Endothelial cell of umbilical vein (primary cell): ENCODE measurements at regions of chr3 and their contacts with region 1.

Region 1: DNA sequence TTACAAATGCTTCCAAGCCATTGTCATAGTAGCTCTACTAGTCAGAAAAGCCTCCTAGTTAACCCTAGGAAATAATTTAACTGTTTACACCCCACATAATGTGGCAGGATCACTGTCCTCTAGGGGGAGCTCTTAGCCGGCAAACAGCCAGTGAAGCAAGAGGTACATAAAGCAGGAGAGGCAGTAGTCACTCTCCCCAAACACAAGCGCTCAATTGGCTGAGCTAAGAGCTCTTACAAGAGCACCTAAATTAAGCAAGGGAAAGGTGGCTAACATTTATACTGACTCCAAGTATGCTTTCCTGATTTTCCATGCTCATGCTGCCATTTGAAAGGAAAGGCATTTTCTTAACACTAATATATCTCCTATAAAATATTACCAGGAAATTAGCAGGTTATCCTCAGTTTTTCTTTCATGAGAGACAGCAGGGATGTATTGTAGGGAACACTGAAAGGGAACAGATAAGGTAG is 37.6 kb downstream of the NCEH1 start:
- DNase-seq: peak; percentile 75
- H3K4me3 ChIP-seq: no peak overlapping the region
- H3K27ac ChIP-seq: no peak overlapping the region
- H3K4me1 ChIP-seq: peaks cover 34% of the 10 kb centered on the region
- H3K27me3 ChIP-seq: no peaks in the 10 kb centered on the region
- CTCF ChIP-seq: peak; percentile 68
- POLR2A ChIP-seq: no peak

Region 2: DNA sequence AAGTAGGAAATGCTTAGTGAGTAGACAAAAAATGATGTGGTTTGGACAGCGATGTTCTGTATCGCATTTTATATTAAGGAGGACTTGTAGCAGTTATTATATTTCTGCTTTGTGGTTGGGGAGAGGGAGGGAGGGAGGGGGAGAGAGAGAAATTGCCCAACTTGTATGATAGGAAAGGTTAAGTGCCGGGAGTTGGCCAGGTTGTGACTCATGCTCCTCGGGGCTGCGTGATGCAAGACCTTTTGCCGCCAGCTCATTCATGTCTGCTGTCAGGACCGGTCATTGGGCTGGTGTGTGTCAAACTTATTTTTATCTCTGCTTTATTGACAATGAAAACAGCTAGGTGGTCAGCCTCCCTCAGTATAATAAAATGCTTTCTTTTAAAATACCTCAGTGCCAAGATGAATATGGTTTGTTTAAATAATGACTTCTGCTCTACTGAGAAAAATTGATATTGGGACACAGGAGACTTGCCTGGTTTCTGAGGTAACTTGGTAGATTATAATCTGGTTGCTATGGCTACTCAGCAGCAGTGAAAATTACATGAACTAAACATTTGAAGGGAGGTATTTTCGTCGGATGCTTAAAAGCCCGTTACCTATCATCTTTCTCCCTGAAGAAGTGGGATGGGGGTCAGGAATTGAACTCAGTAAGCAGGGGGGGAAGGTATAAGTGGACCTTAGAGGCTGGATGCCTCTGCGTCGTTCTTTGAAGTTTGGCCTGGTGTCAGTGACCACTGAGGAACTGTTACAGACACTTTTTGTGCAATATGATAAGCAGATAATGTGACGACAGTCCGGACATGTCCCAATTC is 543.2 kb before region 1 on chr3:
- CTCF ChIA-PET with region 1: no interaction called
- POLR2A ChIA-PET with region 1: no interaction called
- dilution Hi-C with region 1: no loop called
- intact Hi-C with region 1: no loop called
- DNase-seq: peak; percentile 94
- H3K4me3 ChIP-seq: no peak overlapping the region
- H3K27ac ChIP-seq: peak overlapping the region; percentile 95
- H3K4me1 ChIP-seq: peaks cover 73% of the 10 kb centered on the region
- H3K27me3 ChIP-seq: no peaks in the 10 kb centered on the region
- CTCF ChIP-seq: no peak
- POLR2A ChIP-seq: no peak

Region 3: DNA sequence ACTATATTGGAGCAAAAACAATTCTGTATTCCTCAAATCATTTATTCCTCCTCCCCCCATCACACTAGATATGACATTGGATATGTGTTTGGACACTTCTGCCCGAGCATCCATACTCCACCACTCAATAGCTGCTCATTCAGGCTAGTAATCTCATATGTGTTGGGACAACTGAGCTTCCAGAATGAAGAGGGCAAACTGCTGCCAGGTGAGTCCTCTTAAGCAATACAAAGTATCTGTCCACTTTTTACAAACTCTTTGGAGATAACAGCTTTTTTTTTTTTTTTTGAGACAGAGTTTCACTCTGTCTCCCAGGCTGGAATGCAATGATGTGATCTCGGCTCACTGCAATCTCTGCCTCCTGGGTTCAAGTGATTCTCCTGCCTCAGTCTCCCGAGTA is 144.6 kb before region 1 on chr3:
- CTCF ChIA-PET with region 1: no interaction called
- POLR2A ChIA-PET with region 1: no interaction called
- dilution Hi-C with region 1: no loop called
- intact Hi-C with region 1: no loop called
- DNase-seq: no peak
- H3K4me3 ChIP-seq: no peak overlapping the region
- H3K27ac ChIP-seq: no peak overlapping the region
- H3K4me1 ChIP-seq: no peaks in the 10 kb centered on the region
- H3K27me3 ChIP-seq: peaks cover 0 to 4% of the 10 kb centered on the region in 2 experiments
- CTCF ChIP-seq: no peak
- POLR2A ChIP-seq: no peak

Region 4: GRCh38 chr3:172685346-172686214 is 12.3 kb after region 1 on chr3:
- CTCF ChIA-PET with region 1: interaction called, 15 read pairs
- POLR2A ChIA-PET with region 1: no interaction called
- dilution Hi-C with region 1: no loop called
- intact Hi-C with region 1: no loop called
- DNase-seq: no peak
- H3K4me3 ChIP-seq: no peak overlapping the region
- H3K27ac ChIP-seq: no peak overlapping the region
- H3K4me1 ChIP-seq: no peaks in the 10 kb centered on the region
- H3K27me3 ChIP-seq: no peaks in the 10 kb centered on the region
- CTCF ChIP-seq: no peak
- POLR2A ChIP-seq: no peak

Region 5: GRCh38 chr3:172710664-172711453 is 37.6 kb after region 1 on chr3 and contains the start of gene NCEH1:
- CTCF ChIA-PET with region 1: interaction called, 38 read pairs
- POLR2A ChIA-PET with region 1: interaction called, 3 read pairs
- dilution Hi-C with region 1: no loop called
- intact Hi-C with region 1: loop called (anchors 1 kb)
- DNase-seq: peak; percentile 98
- H3K4me3 ChIP-seq: peak within 1 kb of the TSS; percentile 36 to 79 (median 75)
- H3K27ac ChIP-seq: peak within 1 kb of the TSS; percentile 88
- H3K4me1 ChIP-seq: peaks cover 26% of the 10 kb centered on the region
- H3K27me3 ChIP-seq: no peaks in the 10 kb centered on the region
- CTCF ChIP-seq: peak; percentile 75 to 88
- POLR2A ChIP-seq: peak; percentile 99
- total RNA-seq, gene NCEH1: 20.3 and 20.5 TPM in 2 replicates

Region 6: DNA sequence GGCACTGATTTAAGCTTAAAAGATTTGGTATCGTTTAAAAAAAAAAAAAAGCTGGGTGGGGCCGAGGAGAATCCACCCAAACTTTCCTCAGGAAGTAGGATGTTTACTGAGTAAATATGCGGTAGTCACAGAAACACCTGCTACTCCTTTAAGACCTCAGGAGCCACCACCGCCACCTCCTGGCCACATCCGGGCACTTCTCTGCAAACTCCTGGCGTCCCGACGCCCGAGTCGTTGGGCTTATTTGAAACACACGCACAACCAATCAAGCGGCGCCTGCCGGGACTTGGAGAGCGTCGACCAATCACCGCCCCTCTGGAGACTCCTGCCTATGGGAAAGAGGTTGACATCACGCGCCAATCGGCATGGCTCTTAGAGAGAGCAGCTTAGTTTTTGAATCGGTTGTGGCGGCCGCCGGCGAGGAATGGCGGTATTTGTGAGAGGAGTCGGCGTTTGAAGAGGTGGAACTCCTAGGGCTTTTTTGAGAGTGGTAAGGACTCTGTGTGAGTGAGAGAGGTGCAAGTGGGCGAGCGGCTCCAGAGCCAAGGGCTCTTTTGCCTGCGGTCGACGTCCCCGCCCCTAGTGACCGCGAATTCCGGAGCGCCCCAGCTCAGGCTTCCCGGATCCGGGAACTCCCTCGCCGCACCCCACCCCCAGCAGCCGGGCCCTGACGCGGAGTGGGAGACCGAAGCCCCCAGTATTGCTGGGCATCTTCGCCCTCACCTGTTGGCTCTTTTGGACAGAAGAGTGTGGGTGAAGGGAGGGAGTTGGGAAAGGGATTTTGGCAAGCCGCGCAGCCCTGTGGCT is 77.3 kb after region 1 on chr3 and contains the start of gene ECT2:
- CTCF ChIA-PET with region 1: interaction called, 91 read pairs
- POLR2A ChIA-PET with region 1: interaction called, 5 read pairs
- dilution Hi-C with region 1: no loop called
- intact Hi-C with region 1: loop called (anchors 1 kb)
- DNase-seq: peak; percentile 99
- H3K4me3 ChIP-seq: peak within 1 kb of the TSS; percentile 63 to 100 (median 100)
- H3K27ac ChIP-seq: peak within 1 kb of the TSS; percentile 97
- H3K4me1 ChIP-seq: peaks cover 32% of the 10 kb centered on the region
- H3K27me3 ChIP-seq: no peaks in the 10 kb centered on the region
- CTCF ChIP-seq: peak; percentile 79 to 80
- POLR2A ChIP-seq: peak; percentile 63
- total RNA-seq, gene ECT2: 44.7 and 47.5 TPM in 2 replicates

Region 7: DNA sequence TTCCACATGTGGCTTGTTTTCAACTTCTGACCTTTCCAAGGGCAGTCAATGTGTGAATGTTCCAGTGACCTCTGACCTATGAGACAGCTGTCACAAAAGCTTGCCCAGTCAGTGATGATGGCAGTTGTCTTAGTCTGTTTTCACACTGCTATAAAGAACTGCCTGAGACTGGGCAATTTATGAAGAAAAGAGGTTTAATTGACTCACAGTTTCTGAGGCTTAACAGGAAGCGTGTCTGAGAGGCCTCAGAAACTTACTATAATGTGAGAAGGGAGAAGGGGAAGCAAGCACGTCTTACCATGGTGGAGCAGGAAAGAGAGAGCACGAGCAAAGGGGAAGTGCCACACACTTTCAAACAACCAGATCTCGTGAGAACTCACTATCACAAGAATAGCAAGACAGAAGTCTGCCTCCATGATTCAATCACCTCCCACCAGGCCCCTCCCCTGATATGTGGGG is 172.9 kb after region 1 on chr3:
- CTCF ChIA-PET with region 1: no interaction called
- POLR2A ChIA-PET with region 1: no interaction called
- dilution Hi-C with region 1: no loop called
- intact Hi-C with region 1: no loop called
- DNase-seq: no peak
- H3K4me3 ChIP-seq: no peak overlapping the region
- H3K27ac ChIP-seq: no peak overlapping the region
- H3K4me1 ChIP-seq: peaks cover 11% of the 10 kb centered on the region
- H3K27me3 ChIP-seq: no peaks in the 10 kb centered on the region
- CTCF ChIP-seq: no peak
- POLR2A ChIP-seq: no peak

Region 8: DNA sequence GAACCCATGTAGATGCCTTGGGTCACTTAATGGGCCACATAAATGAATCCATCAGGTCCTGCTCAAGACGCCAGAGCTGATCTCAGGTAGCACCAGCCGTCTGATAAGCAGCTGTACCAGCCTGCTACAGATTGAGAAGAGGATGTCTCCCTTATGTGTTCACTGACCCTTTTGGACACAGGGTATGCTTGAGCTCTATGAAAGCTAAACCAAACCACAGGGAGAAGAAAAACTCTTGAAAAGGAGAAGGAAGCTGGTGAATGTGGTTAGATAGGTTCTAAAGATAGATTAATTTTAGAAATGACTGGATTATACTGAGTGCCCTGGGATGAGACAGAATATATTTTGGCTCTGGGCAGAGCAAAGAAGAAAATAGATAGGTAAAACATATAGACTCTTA is 280.3 kb after region 1 on chr3:
- CTCF ChIA-PET with region 1: no interaction called
- POLR2A ChIA-PET with region 1: no interaction called
- dilution Hi-C with region 1: no loop called
- intact Hi-C with region 1: no loop called
- DNase-seq: no peak
- H3K4me3 ChIP-seq: no peak overlapping the region
- H3K27ac ChIP-seq: no peak overlapping the region
- H3K4me1 ChIP-seq: no peaks in the 10 kb centered on the region
- H3K27me3 ChIP-seq: no peaks in the 10 kb centered on the region
- CTCF ChIP-seq: no peak
- POLR2A ChIP-seq: no peak